ENCODE measurements at regions of chr3 and their contacts with region 1.

Region 1: DNA sequence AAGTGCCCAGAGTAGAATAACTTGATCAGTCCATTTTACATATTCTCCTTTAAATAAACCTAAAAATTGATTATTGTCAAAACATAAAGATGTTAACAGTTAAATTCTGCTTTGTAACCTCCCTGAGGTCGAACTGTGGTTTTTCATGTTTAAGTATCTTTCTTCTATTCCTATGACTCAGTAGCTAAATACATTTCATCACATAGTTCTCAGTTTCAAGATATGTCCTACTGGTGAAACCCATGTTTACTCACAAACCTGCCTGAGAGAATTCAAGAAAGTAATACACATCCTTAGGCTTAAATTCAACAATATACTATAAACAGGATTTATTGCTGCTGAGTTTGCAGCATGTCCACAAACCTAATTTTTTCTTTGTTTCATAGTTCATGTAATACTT is 692.9 kb downstream of the ZPLD1 start:
- DNase-seq: no peak
- H3K4me3 Mint-ChIP-seq: no peak overlapping the region
- H3K27ac Mint-ChIP-seq: no peak overlapping the region
- H3K4me1 Mint-ChIP-seq: peaks cover 25% of the 10 kb centered on the region
- H3K27me3 Mint-ChIP-seq: no peaks in the 10 kb centered on the region
- CTCF ChIP-seq: no peak

Region 2: GRCh38 chr3:102745882-102746281 is 381.9 kb before region 1 on chr3:
- CTCF ChIA-PET with region 1: no interaction called
- intact Hi-C with region 1: loop called (anchors 2 kb)
- DNase-seq: no peak
- H3K4me3 Mint-ChIP-seq: no peak overlapping the region
- H3K27ac Mint-ChIP-seq: no peak overlapping the region
- H3K4me1 Mint-ChIP-seq: no peaks in the 10 kb centered on the region
- H3K27me3 Mint-ChIP-seq: no peaks in the 10 kb centered on the region
- CTCF ChIP-seq: no peak

Region 3: GRCh38 chr3:103057003-103057402 is 70.7 kb before region 1 on chr3:
- CTCF ChIA-PET with region 1: interaction called, 3 read pairs
- intact Hi-C with region 1: loop called (anchors 5 kb)
- DNase-seq: peak; percentile 35
- H3K4me3 Mint-ChIP-seq: peak overlapping the region; percentile 32
- H3K27ac Mint-ChIP-seq: peak overlapping the region; percentile 43
- H3K4me1 Mint-ChIP-seq: peaks cover 33% of the 10 kb centered on the region
- H3K27me3 Mint-ChIP-seq: no peaks in the 10 kb centered on the region
- CTCF ChIP-seq: no peak

Region 4: DNA sequence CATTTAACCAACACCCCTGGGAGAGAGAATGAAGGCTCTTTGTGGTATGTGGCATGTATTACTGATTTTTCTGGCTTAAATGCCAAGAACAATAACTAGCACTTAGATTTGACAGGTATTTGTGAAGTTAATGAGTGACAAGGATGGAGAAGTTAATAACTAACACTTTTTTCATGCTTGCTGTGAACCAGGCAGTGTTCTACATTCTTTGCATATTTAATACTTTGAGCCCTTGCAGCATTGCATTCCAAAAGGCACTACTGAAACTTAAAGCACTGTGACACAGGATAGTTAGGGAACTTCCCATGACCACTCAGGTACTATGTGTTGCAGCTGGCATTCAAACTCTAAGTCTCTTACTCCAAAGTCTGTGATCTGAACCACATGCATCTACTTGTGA is 42.3 kb before region 1 on chr3:
- CTCF ChIA-PET with region 1: interaction called, 3 read pairs
- intact Hi-C with region 1: loop called (anchors 2 kb)
- DNase-seq: peak; percentile 45
- H3K4me3 Mint-ChIP-seq: peak overlapping the region; percentile 20
- H3K27ac Mint-ChIP-seq: peak overlapping the region; percentile 56
- H3K4me1 Mint-ChIP-seq: peaks cover 54% of the 10 kb centered on the region
- H3K27me3 Mint-ChIP-seq: no peaks in the 10 kb centered on the region
- CTCF ChIP-seq: no peak

Region 5: DNA sequence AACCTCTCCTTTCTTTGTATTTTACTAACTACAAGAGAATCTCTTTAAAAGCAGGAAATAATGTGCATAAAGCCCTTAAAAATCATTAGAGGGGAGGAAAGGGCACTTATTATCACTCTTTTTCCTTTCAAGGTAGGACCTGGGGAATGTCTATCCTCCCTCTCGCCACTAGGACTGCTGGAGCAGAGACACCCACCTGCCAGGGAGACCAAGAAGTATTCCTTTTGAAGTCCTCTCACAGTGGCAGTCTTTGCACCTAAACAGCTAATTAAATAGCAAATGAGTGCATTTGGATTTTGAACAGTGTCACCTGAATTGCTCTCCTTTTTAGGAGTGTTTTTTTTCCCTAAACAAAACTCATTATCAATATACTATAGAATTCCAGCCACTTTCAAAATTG is 181.2 kb after region 1 on chr3:
- CTCF ChIA-PET with region 1: no interaction called
- intact Hi-C with region 1: no loop called
- DNase-seq: peak; percentile 1
- H3K4me3 Mint-ChIP-seq: no peak overlapping the region
- H3K27ac Mint-ChIP-seq: no peak overlapping the region
- H3K4me1 Mint-ChIP-seq: no peaks in the 10 kb centered on the region
- H3K27me3 Mint-ChIP-seq: no peaks in the 10 kb centered on the region
- CTCF ChIP-seq: peak; percentile 25

Region 6: DNA sequence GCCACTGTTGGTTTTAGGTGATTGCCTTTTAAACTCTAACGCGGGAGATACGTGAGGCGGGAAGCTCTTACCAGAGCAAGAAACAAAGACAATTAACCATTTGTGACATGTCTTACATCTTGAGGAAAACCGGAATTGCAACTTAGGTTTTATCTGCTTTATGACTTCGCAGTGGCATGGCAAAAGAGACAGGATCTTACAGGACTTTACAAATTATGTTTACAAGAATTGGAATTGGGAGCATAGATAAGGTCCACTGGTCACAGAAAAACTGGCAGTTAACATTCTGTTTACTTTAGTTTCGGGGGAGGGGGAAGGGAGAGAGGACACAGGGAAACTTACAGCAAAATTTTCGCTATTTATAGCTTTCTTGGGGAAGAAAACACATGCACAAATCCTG is 426.7 kb after region 1 on chr3:
- CTCF ChIA-PET with region 1: no interaction called
- intact Hi-C with region 1: no loop called
- DNase-seq: no peak
- H3K4me3 Mint-ChIP-seq: no peak overlapping the region
- H3K27ac Mint-ChIP-seq: no peak overlapping the region
- H3K4me1 Mint-ChIP-seq: no peaks in the 10 kb centered on the region
- H3K27me3 Mint-ChIP-seq: no peaks in the 10 kb centered on the region
- CTCF ChIP-seq: no peak

Measured in Calu3 (cell line).